Endothelial cell of umbilical vein (primary cell): ENCODE measurements at regions of chr4 and their contacts with region 1.

Region 1: DNA sequence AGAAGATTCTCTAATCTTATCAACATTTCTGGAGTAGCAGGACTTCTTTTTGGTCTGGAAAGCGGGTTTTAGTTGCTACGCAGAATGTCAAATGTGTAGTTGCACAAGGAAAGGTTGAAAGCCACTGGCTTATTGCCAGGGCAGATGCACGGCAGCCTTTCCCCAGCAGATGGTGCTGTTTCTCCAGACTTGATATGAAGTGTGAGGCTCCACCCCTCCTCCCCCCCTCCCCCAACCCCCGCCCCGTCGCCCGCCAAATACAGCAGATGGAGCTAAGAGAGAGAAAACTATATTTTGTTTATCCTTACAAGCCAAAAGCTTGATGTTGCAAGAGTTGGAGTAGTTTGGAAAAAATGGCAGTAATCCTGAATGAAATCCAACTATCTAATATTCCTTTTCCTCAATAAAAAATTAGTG is 32.0 kb downstream of the ENOPH1 start:
- DNase-seq: peak; percentile 86
- H3K4me3 ChIP-seq: no peak overlapping the region
- H3K27ac ChIP-seq: no peak overlapping the region
- H3K4me1 ChIP-seq: no peaks in the 10 kb centered on the region
- H3K27me3 ChIP-seq: no peaks in the 10 kb centered on the region
- CTCF ChIP-seq: peak; percentile 62 to 80
- POLR2A ChIP-seq: no peak

Region 2: DNA sequence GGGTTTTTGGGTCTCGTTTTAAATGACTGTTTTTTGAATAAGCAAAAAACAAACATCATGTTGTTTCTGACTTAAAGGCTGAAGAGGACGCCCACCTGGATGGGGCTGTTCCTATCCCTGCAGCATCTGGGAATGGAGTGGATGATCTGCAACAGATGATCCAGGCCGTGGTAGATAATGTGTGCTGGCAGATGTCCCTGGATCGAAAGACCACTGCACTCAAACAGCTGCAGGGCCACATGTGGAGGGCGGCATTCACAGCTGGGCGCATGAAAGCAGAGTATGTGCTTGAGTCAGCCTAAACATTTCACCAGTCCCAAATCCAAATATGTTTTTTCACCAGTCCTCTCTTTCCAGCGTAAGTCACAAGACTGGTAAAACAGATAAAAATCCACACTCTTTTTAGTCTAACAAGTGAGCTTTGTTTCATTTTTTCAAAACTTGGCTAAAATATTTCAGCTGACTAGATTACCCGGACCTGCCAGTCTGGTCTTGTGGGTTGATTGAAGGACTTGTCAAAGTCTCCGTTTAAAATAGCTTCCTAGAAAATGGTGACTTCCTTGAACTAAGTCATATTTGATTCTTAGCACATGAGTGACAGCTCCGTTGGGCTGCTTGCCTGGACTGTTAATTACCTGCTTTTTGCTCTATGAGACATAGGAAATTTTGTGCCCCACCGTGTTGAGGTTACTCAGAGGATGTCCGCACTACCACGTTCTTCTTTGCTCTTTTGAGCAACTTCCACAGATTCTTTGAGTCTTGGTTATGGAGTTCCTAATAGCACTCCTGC is 11.3 kb before region 1 on chr4:
- CTCF ChIA-PET with region 1: interaction called, 20 read pairs
- POLR2A ChIA-PET with region 1: no interaction called
- dilution Hi-C with region 1: no loop called
- intact Hi-C with region 1: no loop called
- DNase-seq: no peak
- H3K4me3 ChIP-seq: no peak overlapping the region
- H3K27ac ChIP-seq: no peak overlapping the region
- H3K4me1 ChIP-seq: no peaks in the 10 kb centered on the region
- H3K27me3 ChIP-seq: no peaks in the 10 kb centered on the region
- CTCF ChIP-seq: no peak
- POLR2A ChIP-seq: no peak

Region 3: DNA sequence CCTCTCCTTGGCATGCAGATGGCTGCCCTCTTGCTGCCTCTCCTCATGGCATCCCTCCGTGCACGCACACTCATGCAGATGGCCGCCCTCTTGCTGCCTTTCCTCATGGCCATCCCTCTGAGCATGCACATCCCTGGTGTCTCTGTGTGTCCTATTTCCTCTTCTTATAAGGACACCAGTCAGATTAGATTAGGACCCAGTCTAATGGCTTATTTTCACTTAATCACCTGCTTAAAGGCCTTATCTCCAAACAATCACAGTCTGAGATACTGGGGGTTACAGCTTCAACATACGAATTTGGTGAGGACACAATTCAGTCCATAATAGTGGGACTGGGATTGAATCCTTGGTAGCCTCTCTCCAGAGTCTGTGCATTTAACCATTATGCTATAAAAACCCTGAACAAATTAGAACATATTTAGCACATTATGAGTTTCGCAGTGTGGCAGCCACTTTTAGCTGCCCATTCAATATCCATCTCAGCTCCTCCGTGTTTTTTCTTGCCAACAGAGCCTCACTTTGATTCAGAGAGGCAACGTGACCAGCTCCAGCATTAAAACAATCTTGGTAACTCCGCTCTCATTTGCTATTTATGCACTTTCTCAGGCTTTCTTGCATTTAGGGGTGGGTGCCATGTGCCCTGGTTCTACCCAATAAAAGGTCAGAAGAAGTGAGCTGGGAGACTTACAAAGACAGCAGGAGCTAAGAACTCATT is 125.6 kb after region 1 on chr4:
- CTCF ChIA-PET with region 1: no interaction called
- POLR2A ChIA-PET with region 1: no interaction called
- dilution Hi-C with region 1: no loop called
- intact Hi-C with region 1: no loop called
- DNase-seq: no peak
- H3K4me3 ChIP-seq: no peak overlapping the region
- H3K27ac ChIP-seq: no peak overlapping the region
- H3K4me1 ChIP-seq: no peaks in the 10 kb centered on the region
- H3K27me3 ChIP-seq: peaks cover 11% of the 10 kb centered on the region in 2 experiments
- CTCF ChIP-seq: no peak
- POLR2A ChIP-seq: no peak

Region 4: GRCh38 chr4:82733636-82734035 is 271.2 kb after region 1 on chr4:
- CTCF ChIA-PET with region 1: interaction called, 500 read pairs
- POLR2A ChIA-PET with region 1: no interaction called
- dilution Hi-C with region 1: no loop called
- intact Hi-C with region 1: no loop called
- DNase-seq: peak; percentile 47
- H3K4me3 ChIP-seq: no peak overlapping the region
- H3K27ac ChIP-seq: no peak overlapping the region
- H3K4me1 ChIP-seq: no peaks in the 10 kb centered on the region
- H3K27me3 ChIP-seq: no peaks in the 10 kb centered on the region
- CTCF ChIP-seq: no peak
- POLR2A ChIP-seq: no peak

Region 5: DNA sequence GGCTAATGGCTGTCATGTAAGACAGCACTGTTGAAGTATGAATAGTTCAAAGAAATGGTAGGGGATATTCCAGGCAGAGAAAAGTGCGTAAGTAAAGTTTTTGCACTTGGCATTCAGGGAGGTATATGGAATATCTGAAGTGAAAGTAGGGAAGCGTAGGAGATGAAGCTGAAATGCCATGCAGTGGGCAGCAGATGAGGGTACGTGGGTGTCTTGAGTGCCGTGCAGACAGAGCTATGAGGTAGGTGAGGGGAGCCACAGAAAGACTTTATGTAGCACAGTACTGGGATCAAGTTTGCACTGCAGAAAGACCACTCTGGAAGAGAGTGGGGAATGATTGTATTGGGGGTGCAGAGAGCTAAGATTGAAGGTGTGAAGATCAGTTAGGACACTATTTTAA is 341.3 kb after region 1 on chr4:
- CTCF ChIA-PET with region 1: interaction called, 20 read pairs
- POLR2A ChIA-PET with region 1: no interaction called
- dilution Hi-C with region 1: no loop called
- intact Hi-C with region 1: loop called (anchors 1 kb)
- DNase-seq: no peak
- H3K4me3 ChIP-seq: no peak overlapping the region
- H3K27ac ChIP-seq: no peak overlapping the region
- H3K4me1 ChIP-seq: peaks cover 2% of the 10 kb centered on the region
- H3K27me3 ChIP-seq: peaks cover 6 to 9% of the 10 kb centered on the region in 2 experiments
- CTCF ChIP-seq: no peak
- POLR2A ChIP-seq: no peak

Region 6: GRCh38 chr4:82833696-82834313 is 371.4 kb after region 1 on chr4:
- CTCF ChIA-PET with region 1: interaction called, 10 read pairs
- POLR2A ChIA-PET with region 1: no interaction called
- dilution Hi-C with region 1: no loop called
- intact Hi-C with region 1: loop called (anchors 5 kb)
- DNase-seq: peak; percentile 74
- H3K4me3 ChIP-seq: no peak overlapping the region
- H3K27ac ChIP-seq: peak overlapping the region; percentile 23
- H3K4me1 ChIP-seq: peaks cover 12% of the 10 kb centered on the region
- H3K27me3 ChIP-seq: no peaks in the 10 kb centered on the region
- CTCF ChIP-seq: no peak
- POLR2A ChIP-seq: no peak

Region 7: DNA sequence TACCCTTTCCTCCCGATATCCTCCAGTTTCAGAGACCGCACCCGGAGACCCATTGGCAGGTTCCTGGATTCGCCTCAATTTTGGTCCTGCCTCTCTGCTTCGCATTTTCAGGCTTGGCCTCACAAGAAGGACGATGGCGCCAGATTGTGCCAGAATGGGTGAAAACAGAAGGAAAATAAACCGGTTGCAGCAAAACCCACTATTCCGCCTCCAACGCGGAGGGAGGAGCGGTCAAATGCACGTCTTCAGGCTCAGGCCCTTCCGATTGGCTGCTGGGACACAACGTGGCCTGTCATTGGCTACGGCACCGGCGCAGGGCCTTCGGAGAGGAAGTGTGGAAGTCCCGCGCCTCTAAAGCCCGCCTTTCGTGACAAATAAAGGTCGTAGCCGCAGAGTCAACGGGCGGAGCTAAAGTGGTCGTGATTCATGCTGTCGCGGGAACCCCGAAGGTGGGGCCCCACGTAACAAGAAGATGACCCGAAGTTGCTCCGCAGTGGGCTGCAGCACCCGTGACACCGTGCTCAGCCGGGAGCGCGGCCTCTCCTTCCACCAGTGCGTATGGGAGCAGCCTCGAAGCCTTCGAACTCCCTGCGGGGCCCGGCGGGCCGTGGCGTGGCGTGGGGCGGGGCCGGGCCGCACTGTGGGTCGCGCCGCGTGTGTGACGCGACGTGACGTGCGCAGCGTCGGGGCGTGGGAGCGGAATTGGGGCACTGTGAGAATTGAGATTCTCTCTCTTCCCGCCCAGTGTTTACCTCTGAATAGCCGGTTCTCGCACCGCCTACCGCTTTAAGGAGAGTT is 438.1 kb after region 1 on chr4 and contains the start of gene THAP9:
- CTCF ChIA-PET with region 1: interaction called, 3 read pairs
- POLR2A ChIA-PET with region 1: no interaction called
- dilution Hi-C with region 1: no loop called
- intact Hi-C with region 1: loop called (anchors 1 kb)
- DNase-seq: peak; percentile 100
- H3K4me3 ChIP-seq: peak within 1 kb of the TSS; percentile 71 to 92 (median 90)
- H3K27ac ChIP-seq: peak within 1 kb of the TSS; percentile 96
- H3K4me1 ChIP-seq: peaks cover 18% of the 10 kb centered on the region
- H3K27me3 ChIP-seq: no peaks in the 10 kb centered on the region
- CTCF ChIP-seq: no peak
- POLR2A ChIP-seq: peak; percentile 75
- total RNA-seq, gene THAP9: 1.7 and 3.2 TPM in 2 replicates

Region 8: GRCh38 chr4:82984459-82984858 is 522.0 kb after region 1 on chr4:
- CTCF ChIA-PET with region 1: no interaction called
- POLR2A ChIA-PET with region 1: no interaction called
- dilution Hi-C with region 1: no loop called
- intact Hi-C with region 1: no loop called
- DNase-seq: peak; percentile 5
- H3K4me3 ChIP-seq: no peak overlapping the region
- H3K27ac ChIP-seq: no peak overlapping the region
- H3K4me1 ChIP-seq: peaks cover 21% of the 10 kb centered on the region
- H3K27me3 ChIP-seq: no peaks in the 10 kb centered on the region
- CTCF ChIP-seq: no peak
- POLR2A ChIP-seq: no peak